ENCODE measurements at regions of chr17 and their contacts with region 1.

Region 1: DNA sequence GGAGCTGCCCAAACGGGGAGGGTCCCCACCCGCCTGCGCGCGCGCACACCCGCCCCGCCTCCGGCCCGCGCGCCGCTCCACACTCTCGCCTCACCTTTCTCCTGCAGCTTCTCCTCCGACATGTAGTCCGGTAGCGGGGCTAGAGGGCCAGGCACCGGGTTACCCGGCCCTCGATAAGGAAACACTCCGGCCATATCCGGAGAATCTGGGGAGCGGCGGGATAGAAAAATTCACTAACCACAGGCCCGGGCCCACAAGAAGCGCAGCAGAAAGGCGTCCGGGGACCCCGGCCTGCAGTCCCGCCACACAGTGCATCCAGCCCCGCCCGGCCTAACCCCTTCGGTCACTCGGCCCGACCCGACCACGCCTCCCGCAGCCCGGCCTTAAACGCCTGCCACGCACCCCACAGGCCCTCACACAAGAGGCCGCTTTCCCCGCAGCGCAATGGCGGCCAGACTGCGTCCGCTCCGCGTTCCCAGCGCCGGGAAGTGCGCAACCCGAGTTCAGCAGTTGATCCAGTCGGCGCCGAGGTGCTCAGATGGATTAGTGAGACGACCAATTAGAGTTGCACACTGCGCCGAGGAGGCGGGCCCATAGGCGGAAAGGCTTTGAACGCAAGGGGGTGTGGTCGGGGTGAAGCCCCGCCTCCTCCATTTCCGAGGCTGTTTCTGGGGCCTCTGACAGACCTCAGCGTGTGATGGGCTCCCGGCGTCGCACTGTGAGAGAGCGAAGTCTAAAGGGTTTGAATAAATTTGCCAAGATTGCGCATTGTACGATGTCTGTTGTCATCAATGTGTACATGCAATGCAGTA is at the start of gene PRPF8:
- DNase-seq: peak; percentile 97 to 99 (median 98)
- ATAC-seq: peak; percentile 96
- H3K4me3 ChIP-seq: peak within 1 kb of the TSS; percentile 93
- H3K4me3 Mint-ChIP-seq: peak within 1 kb of the TSS; percentile 99
- H3K27ac ChIP-seq: peak within 1 kb of the TSS; percentile 86 to 95
- H3K27ac Mint-ChIP-seq: peak within 1 kb of the TSS; percentile 96
- H3K4me1 ChIP-seq: peaks cover 33% of the 10 kb centered on the region
- H3K4me1 Mint-ChIP-seq: peaks cover 49% of the 10 kb centered on the region
- H3K27me3 ChIP-seq: no peaks in the 10 kb centered on the region
- H3K27me3 Mint-ChIP-seq: no peaks in the 10 kb centered on the region
- CTCF ChIP-seq: no peak
- total RNA-seq, gene PRPF8: 550 to 572 TPM

Region 2: DNA sequence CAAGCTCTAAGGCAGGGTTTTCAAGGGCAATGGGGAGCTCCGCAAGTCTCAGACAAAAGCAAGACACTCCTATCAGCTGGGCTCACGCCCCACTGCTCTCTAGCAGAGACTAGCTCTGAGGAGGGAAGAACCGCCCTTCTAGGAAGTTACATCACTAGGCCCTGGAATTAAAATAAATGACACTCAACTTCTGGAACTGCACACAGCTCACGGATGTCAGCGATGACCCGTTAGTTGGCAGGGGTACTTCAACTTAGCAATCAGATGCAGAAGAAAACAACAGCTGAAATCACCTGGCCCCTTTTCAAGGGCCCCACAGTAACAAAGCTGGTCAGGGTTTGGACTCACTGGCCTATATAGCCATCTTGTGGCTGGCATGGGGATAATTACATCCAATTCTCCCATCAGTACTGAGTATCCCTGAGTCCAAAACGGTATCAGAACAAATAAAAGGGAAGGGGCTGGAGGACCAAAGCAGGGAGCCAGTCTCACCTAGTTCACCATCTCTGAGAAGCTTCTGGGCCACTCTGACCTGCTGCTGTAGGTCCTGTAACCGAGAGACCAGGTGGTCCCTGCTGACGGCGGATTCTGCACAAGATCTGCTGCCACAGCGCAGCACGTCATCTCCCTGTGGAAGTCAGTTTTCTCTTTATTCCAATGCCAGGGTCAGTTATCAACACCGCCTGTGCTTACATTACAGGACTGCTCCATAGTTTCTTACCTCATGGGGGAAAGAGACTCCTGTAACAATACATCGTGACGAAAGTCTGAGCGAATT is 99.4 kb after region 1 on chr17:
- CTCF ChIA-PET with region 1: no interaction called
- POLR2A ChIA-PET with region 1: interaction called, 10 read pairs
- intact Hi-C with region 1: no loop called
- DNase-seq: peak in 3 of 14 experiments; percentile 31 to 65 (median 54)
- ATAC-seq: peak; percentile 68
- H3K4me3 ChIP-seq: no peak overlapping the region
- H3K4me3 Mint-ChIP-seq: no peak overlapping the region
- H3K27ac ChIP-seq: no peak overlapping the region
- H3K27ac Mint-ChIP-seq: peak overlapping the region; percentile 76
- H3K4me1 ChIP-seq: peaks cover 10% of the 10 kb centered on the region
- H3K4me1 Mint-ChIP-seq: peaks cover 10% of the 10 kb centered on the region
- H3K27me3 ChIP-seq: no peaks in the 10 kb centered on the region
- H3K27me3 Mint-ChIP-seq: no peaks in the 10 kb centered on the region
- CTCF ChIP-seq: peak; percentile 53

Region 3: DNA sequence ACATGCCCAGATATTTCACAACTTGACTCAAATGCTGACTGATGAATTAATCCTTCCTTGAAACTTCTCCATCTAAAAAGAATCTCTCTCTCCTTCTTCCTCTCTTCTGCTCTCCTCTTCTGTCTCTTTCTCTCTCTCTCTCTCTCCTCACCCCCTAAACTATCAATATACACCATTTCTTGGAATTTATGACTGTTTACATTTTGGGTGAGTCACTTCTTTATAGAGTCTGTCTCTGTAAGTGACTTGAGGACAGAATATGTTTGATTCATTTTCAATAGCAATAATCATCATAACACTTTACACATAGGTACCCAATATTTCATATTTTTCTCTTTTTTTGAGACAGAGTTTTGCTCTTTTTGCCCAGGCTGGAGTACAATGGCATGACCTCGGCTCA is 1598.3 kb after region 1 on chr17:
- CTCF ChIA-PET with region 1: no interaction called
- POLR2A ChIA-PET with region 1: no interaction called
- intact Hi-C with region 1: no loop called
- DNase-seq: no peak
- ATAC-seq: no peak
- H3K4me3 ChIP-seq: no peak overlapping the region
- H3K4me3 Mint-ChIP-seq: no peak overlapping the region
- H3K27ac ChIP-seq: no peak overlapping the region
- H3K27ac Mint-ChIP-seq: no peak overlapping the region
- H3K4me1 ChIP-seq: no peaks in the 10 kb centered on the region
- H3K4me1 Mint-ChIP-seq: no peaks in the 10 kb centered on the region
- H3K27me3 ChIP-seq: no peaks in the 10 kb centered on the region
- H3K27me3 Mint-ChIP-seq: peaks cover 7% of the 10 kb centered on the region
- CTCF ChIP-seq: no peak

Measured in CD4-positive, alpha-beta T cell (primary cell).